ENCODE measurements at regions of chr1 and their contacts with region 1.

Region 1: DNA sequence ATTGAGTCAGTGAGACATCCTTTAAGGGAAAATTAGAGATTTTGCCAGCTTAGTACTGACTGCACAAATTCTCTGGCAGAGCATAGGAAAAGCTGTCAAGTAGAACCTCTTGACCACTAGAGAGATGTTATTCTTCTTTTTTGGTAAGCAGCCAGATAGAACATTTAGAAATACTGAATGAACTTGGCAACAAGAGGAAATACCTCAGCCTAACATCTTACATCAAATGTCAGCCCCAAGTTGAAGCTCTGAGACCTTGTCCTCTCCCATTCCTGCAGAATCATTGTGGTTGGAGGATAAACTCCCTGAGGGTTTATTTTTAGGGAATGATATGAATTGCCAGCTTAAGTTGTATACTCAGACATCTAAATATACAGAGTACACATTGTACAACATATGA is 53.5 kb downstream of the MIGA1 start:
- DNase-seq: no peak
- H3K4me3 ChIP-seq: no peak overlapping the region
- H3K27ac ChIP-seq: peak overlapping the region; percentile 68 to 89 (median 82)
- H3K4me1 ChIP-seq: peaks cover 0 to 68% (median 60%) of the 10 kb centered on the region in 4 donors
- H3K27me3 ChIP-seq: no peaks in the 10 kb centered on the region
- CTCF ChIP-seq: no peak
- EP300 ChIP-seq: peak in 2 of 4 donors; percentile 36 to 58
- POLR2A ChIP-seq: no peak

Region 2: GRCh38 chr1:77779529-77780281 is 53.2 kb before region 1 on chr1 and contains the start of gene MIGA1:
- intact Hi-C with region 1: loop called (anchors 5 kb)
- DNase-seq: peak; percentile 94
- H3K4me3 ChIP-seq: peak within 1 kb of the TSS; percentile 66 to 94 (median 91)
- H3K27ac ChIP-seq: peak within 1 kb of the TSS; percentile 73 to 84 (median 77)
- H3K4me1 ChIP-seq: peaks cover 0 to 26% (median 15%) of the 10 kb centered on the region in 4 donors
- H3K27me3 ChIP-seq: no peaks in the 10 kb centered on the region
- CTCF ChIP-seq: no peak
- EP300 ChIP-seq: no peak
- POLR2A ChIP-seq: no peak
- total RNA-seq, gene MIGA1: 18.8 to 22.2 (median 20.4) TPM

Region 3: GRCh38 chr1:77888081-77888780 is 55.3 kb after region 1 on chr1 and contains the start of gene NEXN:
- intact Hi-C with region 1: loop called (anchors 2 kb)
- DNase-seq: peak; percentile 93
- H3K4me3 ChIP-seq: peak within 1 kb of the TSS; percentile 84 to 92 (median 88)
- H3K27ac ChIP-seq: peak within 1 kb of the TSS; percentile 86 to 98 (median 94)
- H3K4me1 ChIP-seq: peaks cover 0 to 43% (median 24%) of the 10 kb centered on the region in 4 donors
- H3K27me3 ChIP-seq: no peaks in the 10 kb centered on the region
- CTCF ChIP-seq: no peak
- EP300 ChIP-seq: peak in 3 of 4 donors; percentile 41 to 55 (median 45)
- POLR2A ChIP-seq: peak; percentile 38 to 66
- total RNA-seq, gene NEXN: 68.8 to 158 (median 95.3) TPM

Region 4: GRCh38 chr1:78114034-78114956 is 281.4 kb after region 1 on chr1:
- intact Hi-C with region 1: loop called (anchors 5 kb)
- DNase-seq: no peak
- H3K4me3 ChIP-seq: no peak overlapping the region
- H3K27ac ChIP-seq: peak overlapping the region in 2 of 4 donors; percentile 11 to 16
- H3K4me1 ChIP-seq: peaks cover 0 to 6% (median 0%) of the 10 kb centered on the region in 4 donors
- H3K27me3 ChIP-seq: no peaks in the 10 kb centered on the region
- CTCF ChIP-seq: peak; percentile 53 to 85 (median 80)
- EP300 ChIP-seq: no peak
- POLR2A ChIP-seq: no peak

Region 5: DNA sequence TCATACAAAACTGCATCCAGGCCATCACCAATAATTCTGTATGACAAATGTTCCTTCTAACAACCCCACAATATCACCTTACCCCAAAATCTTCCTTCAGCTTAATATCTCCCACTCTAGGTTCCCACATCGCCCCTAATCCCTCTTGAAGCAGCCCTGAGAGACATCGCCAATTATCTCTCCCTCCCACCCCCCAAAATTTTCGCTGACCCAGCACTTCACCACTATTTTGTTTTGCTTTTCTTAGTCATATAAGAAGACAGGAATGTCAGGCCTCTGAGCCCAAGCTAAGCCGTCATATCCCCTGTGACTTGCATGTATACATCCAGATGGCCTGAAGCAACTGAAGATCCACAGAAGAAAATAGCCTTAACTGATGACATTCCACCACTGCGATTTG is 1047.3 kb after region 1 on chr1:
- intact Hi-C with region 1: no loop called
- DNase-seq: no peak
- H3K4me3 ChIP-seq: no peak overlapping the region
- H3K27ac ChIP-seq: no peak overlapping the region
- H3K4me1 ChIP-seq: peaks cover 0 to 11% (median 4%) of the 10 kb centered on the region in 4 donors
- H3K27me3 ChIP-seq: no peaks in the 10 kb centered on the region
- CTCF ChIP-seq: no peak
- EP300 ChIP-seq: no peak
- POLR2A ChIP-seq: no peak

Measured in sigmoid colon (tissue), 7 donors.